ENCODE measurements at regions of chr1 and their contacts with region 1.

Region 1: GRCh38 chr1:119140177-119141019 is at the start of gene WARS2:
- DNase-seq: peak; percentile 97 to 98 (median 97)
- H3K4me3 ChIP-seq: peak within 1 kb of the TSS; percentile 63 to 67
- H3K4me3 Mint-ChIP-seq: no peak within 1 kb of the TSS
- H3K27ac ChIP-seq: peak within 1 kb of the TSS; percentile 97
- H3K27ac Mint-ChIP-seq: no peak within 1 kb of the TSS
- H3K4me1 ChIP-seq: peaks cover 27% of the 10 kb centered on the region
- H3K4me1 Mint-ChIP-seq: peaks cover 5 to 36% (median 16%) of the 10 kb centered on the region in 4 donors
- H3K27me3 ChIP-seq: no peaks in the 10 kb centered on the region
- H3K27me3 Mint-ChIP-seq: no peaks in the 10 kb centered on the region
- total RNA-seq, gene WARS2: 6.9 to 9.5 TPM

Region 2: DNA sequence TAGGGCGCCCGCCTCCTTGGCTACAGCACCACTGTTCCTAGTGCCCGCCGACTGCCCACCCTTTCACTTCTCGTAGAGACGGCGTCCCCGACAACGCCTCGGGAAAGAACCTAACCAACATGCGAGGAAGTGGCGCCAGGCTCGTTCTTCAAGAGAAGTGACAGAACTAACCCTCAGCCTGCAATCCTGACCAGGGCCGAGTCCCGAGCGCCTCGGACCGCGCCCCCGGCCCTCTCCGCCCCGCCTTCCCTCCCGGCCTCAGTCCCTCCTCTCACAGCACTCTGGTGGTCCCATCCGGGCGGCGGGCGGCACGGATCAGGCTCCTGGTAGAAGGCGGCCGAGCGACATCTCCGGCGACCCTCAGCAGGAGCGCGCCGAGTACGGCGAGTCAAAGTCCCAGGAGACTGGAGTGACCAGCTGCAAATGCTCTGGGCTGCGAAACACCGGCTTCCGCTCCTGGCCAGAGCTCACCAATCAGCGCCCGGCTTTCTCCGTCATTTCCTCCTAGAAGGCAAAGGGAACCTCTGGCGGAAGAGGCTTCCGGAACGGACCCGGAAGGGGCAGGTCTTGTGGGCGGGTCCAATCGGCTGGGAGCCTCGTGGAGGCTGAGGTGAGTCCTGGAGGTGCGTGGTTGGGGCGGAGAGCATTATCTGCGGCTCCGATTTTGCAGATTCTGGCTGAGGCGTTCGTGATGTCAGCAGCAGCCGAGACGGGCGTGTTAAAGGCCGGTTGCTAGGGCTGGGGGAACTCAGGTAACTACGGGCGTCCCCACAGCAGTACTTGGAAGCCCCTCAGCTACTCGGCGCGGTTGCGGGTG is 1211.0 kb before region 1 on chr1 and contains the starts of genes GDAP2 and WDR3:
- CTCF ChIA-PET with region 1: no interaction called
- POLR2A ChIA-PET with region 1: no interaction called
- intact Hi-C with region 1: loop called (anchors 5 kb)
- DNase-seq: peak; percentile 94 to 99 (median 97)
- H3K4me3 ChIP-seq: peak within 1 kb of the TSS; percentile 66 to 81
- H3K4me3 Mint-ChIP-seq: peak within 1 kb of the TSS; percentile 94 to 97 (median 96)
- H3K27ac ChIP-seq: peak within 1 kb of the TSS; percentile 89
- H3K27ac Mint-ChIP-seq: peak within 1 kb of the TSS; percentile 93 to 99 (median 97)
- H3K4me1 ChIP-seq: peaks cover 41% of the 10 kb centered on the region
- H3K4me1 Mint-ChIP-seq: peaks cover 39 to 63% (median 51%) of the 10 kb centered on the region in 4 donors
- H3K27me3 ChIP-seq: no peaks in the 10 kb centered on the region
- H3K27me3 Mint-ChIP-seq: no peaks in the 10 kb centered on the region
- total RNA-seq, gene GDAP2: 28.1 to 29.5 TPM
- total RNA-seq, gene WDR3: 26.5 to 29.3 TPM